ENCODE measurements at regions of chr2 and their contacts with region 1.

Region 1: GRCh38 chr2:207283356-207283755 is 117.6 kb upstream of the KLF7 start:
- DNase-seq: no peak
- H3K4me3 Mint-ChIP-seq: peak overlapping the region; percentile 53
- H3K27ac Mint-ChIP-seq: peak overlapping the region; percentile 85
- H3K4me1 Mint-ChIP-seq: peaks cover 76% of the 10 kb centered on the region
- H3K27me3 Mint-ChIP-seq: no peaks in the 10 kb centered on the region

Region 2: GRCh38 chr2:207311316-207312005 is 28.1 kb after region 1 on chr2:
- intact Hi-C with region 1: loop called (anchors 1 kb)
- DNase-seq: no peak
- H3K4me3 Mint-ChIP-seq: no peak overlapping the region
- H3K27ac Mint-ChIP-seq: peak overlapping the region; percentile 88
- H3K4me1 Mint-ChIP-seq: peaks cover 49% of the 10 kb centered on the region
- H3K27me3 Mint-ChIP-seq: no peaks in the 10 kb centered on the region

Region 3: GRCh38 chr2:208356846-208357574 is 1073.7 kb after region 1 on chr2:
- intact Hi-C with region 1: no loop called
- DNase-seq: no peak
- H3K4me3 Mint-ChIP-seq: no peak overlapping the region
- H3K27ac Mint-ChIP-seq: peak overlapping the region; percentile 15
- H3K4me1 Mint-ChIP-seq: no peaks in the 10 kb centered on the region
- H3K27me3 Mint-ChIP-seq: no peaks in the 10 kb centered on the region

Region 4: GRCh38 chr2:208619993-208620392 is 1336.6 kb after region 1 on chr2:
- intact Hi-C with region 1: no loop called
- DNase-seq: no peak
- H3K4me3 Mint-ChIP-seq: no peak overlapping the region
- H3K27ac Mint-ChIP-seq: no peak overlapping the region
- H3K4me1 Mint-ChIP-seq: no peaks in the 10 kb centered on the region
- H3K27me3 Mint-ChIP-seq: no peaks in the 10 kb centered on the region

Measured in activated T-helper 1 cell treated with anti-CD3 and anti-CD28 coated beads, Interleukin-12 subunit alpha, Interleukin-12 subunit beta, Interleukin-2, Interleukin-4 antibody, amounts not matched to agents 30 ng/mL and 10 ng/mL and 1 ng/mL, durations not matched to agents 14 hours and 24 hours and 36 hours (primary cell).